Activated B cell treated with CpG ODN at 0.5 μM for 24 hours (primary cell): ENCODE measurements at regions of chr18 and their contacts with region 1.

Region 1: DNA sequence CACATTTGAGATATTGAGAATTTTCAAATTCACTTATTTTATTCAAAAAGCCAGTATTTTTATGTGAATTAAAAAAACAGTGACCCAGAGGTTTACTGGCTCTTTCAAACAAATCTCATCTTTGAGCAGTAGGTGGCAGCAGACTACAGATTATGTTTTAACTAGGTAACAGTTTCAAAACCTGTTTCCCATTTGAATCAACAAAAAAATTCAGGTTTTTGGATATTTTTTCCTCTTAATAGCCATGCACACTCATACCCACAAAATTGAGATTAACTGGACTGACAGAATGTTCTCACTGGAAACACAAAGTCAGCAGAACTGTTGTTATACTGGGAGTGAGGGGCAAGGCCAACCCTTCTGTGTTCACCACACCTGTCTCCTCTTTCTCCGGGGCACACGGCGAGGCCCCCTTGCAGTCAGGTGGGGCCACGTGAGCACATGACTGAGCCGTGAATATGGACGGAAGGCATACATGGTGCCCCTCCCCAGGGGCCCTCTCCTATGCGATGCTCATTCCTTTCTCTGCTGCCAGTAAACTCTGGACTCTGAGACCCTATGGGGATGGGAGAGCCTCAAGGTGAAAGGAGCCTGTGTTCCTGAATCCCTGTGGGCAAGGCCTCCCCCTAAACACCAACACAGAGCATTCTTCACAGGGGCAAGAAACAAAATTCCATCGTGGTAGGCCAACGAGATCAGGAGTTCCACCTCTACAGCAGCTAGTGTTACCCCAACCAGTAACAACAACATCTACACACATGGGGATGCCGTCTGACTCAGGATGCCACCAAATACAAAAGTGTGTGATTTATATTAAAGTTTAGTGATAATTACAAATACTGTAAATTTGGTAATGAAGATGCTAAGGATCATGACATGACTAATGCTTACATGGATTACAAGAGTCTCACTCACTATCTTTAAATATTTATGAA is 80.4 kb downstream of the LPIN2 start:
- DNase-seq: no peak
- ATAC-seq: peak; percentile 66
- H3K4me3 Mint-ChIP-seq: no peak overlapping the region
- H3K27ac Mint-ChIP-seq: peak overlapping the region; percentile 76
- H3K4me1 Mint-ChIP-seq: peaks cover 8% of the 10 kb centered on the region
- H3K27me3 Mint-ChIP-seq: no peaks in the 10 kb centered on the region
- CTCF ChIP-seq: peak; percentile 49

Region 2: DNA sequence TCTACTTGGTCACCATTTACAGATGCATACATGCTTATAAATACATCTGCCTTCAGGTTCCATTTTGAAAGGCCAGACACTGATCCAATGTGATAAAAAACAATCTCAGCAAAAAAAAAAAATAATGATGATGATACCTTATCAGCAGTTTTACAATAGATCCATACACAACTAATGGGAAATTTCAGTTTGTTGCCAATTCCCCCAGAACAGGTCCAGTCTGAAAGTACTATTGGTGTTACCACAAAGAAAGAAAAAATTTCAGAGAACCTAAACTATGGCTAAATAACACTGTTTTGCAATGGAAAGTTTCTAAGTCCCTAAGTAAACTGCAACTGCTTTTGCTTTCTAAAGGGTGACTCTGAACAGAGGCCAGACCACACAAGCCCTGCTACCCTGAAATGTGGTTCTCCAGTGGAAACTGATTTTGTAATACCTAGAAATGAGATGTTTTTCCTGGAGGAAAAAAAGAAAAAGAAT is 26.3 kb after region 1 on chr18:
- CTCF ChIA-PET with region 1: interaction called, 5 read pairs
- POLR2A ChIA-PET with region 1: interaction called, 3 read pairs
- intact Hi-C with region 1: loop called (anchors 1 kb)
- DNase-seq: no peak
- ATAC-seq: no peak
- H3K4me3 Mint-ChIP-seq: peak overlapping the region; percentile 32
- H3K27ac Mint-ChIP-seq: peak overlapping the region; percentile 97
- H3K4me1 Mint-ChIP-seq: peaks cover 82% of the 10 kb centered on the region
- H3K27me3 Mint-ChIP-seq: no peaks in the 10 kb centered on the region
- CTCF ChIP-seq: no peak

Region 3: GRCh38 chr18:2994603-2995432 is 62.3 kb after region 1 on chr18:
- CTCF ChIA-PET with region 1: interaction called, 162 read pairs
- POLR2A ChIA-PET with region 1: no interaction called
- intact Hi-C with region 1: no loop called
- DNase-seq: peak; percentile 47
- ATAC-seq: peak; percentile 97
- H3K4me3 Mint-ChIP-seq: peak overlapping the region; percentile 48
- H3K27ac Mint-ChIP-seq: peak overlapping the region; percentile 50
- H3K4me1 Mint-ChIP-seq: peaks cover 34% of the 10 kb centered on the region
- H3K27me3 Mint-ChIP-seq: no peaks in the 10 kb centered on the region
- CTCF ChIP-seq: no peak

Region 4: GRCh38 chr18:3037423-3037915 is 105.0 kb after region 1 on chr18:
- CTCF ChIA-PET with region 1: no interaction called
- POLR2A ChIA-PET with region 1: no interaction called
- intact Hi-C with region 1: no loop called
- DNase-seq: no peak
- ATAC-seq: no peak
- H3K4me3 Mint-ChIP-seq: no peak overlapping the region
- H3K27ac Mint-ChIP-seq: no peak overlapping the region
- H3K4me1 Mint-ChIP-seq: peaks cover 6% of the 10 kb centered on the region
- H3K27me3 Mint-ChIP-seq: no peaks in the 10 kb centered on the region
- CTCF ChIP-seq: no peak

Region 5: DNA sequence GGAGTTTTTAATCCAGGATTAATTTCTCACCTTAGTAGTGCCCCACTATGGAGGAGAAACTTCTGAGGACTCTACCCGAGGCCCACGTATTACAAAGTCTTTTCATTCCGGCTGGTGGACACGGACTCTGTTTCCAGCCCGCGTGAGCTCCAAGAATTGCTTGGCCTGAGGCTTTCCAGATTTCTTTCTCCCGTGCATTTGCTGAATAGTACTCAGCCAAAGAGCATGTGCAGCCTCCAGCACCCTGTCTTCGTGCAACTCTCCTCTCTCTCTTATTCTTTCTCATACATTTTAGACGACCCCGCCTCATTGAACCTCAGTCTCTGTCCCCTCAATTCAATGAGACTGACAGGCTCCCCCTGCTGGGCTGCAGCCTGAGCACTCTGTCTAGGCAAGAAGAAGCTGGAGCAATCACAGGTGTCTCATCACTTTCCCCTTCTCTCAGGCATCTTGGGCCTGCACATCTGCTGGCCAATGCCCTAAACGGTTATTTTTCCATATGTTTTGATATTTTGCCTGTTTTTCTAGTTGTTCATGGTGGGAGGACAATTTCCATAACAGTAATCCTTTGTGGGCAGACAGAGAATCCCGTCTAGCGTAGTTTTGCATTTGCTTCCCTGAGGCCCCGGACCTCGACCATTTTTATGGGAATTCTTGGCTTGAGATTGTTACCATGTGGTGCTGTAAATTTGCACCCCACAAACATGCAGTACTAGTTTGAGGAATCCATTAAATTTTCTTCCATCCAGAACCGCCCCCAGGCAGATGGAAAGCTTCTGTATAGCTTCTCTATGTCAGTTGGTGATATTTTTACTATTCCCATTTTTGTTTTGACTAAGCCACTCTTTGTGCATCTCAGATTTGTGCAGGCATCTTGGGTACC is 130.5 kb after region 1 on chr18:
- CTCF ChIA-PET with region 1: interaction called, 26 read pairs
- POLR2A ChIA-PET with region 1: no interaction called
- intact Hi-C with region 1: loop called (anchors 1 kb)
- DNase-seq: peak; percentile 29
- ATAC-seq: peak; percentile 59
- H3K4me3 Mint-ChIP-seq: no peak overlapping the region
- H3K27ac Mint-ChIP-seq: no peak overlapping the region
- H3K4me1 Mint-ChIP-seq: peaks cover 49% of the 10 kb centered on the region
- H3K27me3 Mint-ChIP-seq: no peaks in the 10 kb centered on the region
- CTCF ChIP-seq: no peak

Region 6: GRCh38 chr18:3129053-3129864 is 196.7 kb after region 1 on chr18:
- CTCF ChIA-PET with region 1: interaction called, 14 read pairs
- POLR2A ChIA-PET with region 1: no interaction called
- intact Hi-C with region 1: loop called (anchors 1 kb)
- DNase-seq: peak; percentile 59
- ATAC-seq: peak; percentile 99
- H3K4me3 Mint-ChIP-seq: no peak overlapping the region
- H3K27ac Mint-ChIP-seq: no peak overlapping the region
- H3K4me1 Mint-ChIP-seq: peaks cover 6% of the 10 kb centered on the region
- H3K27me3 Mint-ChIP-seq: no peaks in the 10 kb centered on the region
- CTCF ChIP-seq: peak; percentile 16

Region 7: DNA sequence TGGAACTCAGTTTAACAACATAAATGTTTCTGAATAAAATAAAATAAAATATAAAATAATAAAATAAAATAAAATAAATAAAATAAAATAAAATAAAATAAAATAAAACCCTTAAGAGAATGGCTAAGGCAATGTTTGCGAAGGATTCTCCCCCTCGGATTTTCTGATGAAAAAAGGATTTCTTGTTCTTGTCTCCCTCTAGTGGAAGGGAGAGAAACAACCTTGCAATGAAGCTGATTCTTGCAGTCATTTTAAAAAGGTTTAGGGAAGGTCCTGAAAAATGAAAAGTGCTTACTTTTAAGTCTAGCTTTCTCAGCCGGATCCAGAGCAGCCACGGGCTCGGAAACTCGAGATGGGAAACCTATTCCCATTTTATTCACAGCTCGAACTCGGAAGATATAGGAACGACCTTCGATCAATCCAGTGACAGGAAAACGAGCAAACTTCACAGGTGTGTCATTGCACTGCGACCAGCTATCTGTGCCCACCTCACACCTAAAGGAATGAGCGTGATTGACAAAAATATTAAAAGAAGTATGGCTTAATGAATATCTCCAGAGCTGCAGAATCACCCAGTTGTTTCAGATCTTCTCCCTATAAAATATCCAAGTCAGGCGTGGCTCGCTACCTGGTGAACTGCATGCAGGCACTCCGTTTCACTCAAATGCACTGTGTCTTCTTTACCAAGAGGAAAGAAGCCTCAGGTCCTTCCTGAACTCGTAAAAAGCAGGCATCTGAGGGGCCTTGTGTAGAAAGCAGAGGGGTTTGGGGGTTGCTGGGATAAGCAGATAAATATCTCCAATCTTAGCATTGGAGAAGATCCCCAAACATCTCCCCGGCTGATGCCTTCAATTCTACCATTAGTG is 219.1 kb after region 1 on chr18:
- CTCF ChIA-PET with region 1: interaction called, 5 read pairs
- POLR2A ChIA-PET with region 1: no interaction called
- intact Hi-C with region 1: loop called (anchors 1 kb)
- DNase-seq: no peak
- ATAC-seq: no peak
- H3K4me3 Mint-ChIP-seq: no peak overlapping the region
- H3K27ac Mint-ChIP-seq: peak overlapping the region; percentile 36
- H3K4me1 Mint-ChIP-seq: peaks cover 2% of the 10 kb centered on the region
- H3K27me3 Mint-ChIP-seq: no peaks in the 10 kb centered on the region
- CTCF ChIP-seq: peak; percentile 99